Activated CD8-positive, alpha-beta T cell treated with anti-CD3 and anti-CD28 coated beads for 36 hours (primary cell): ENCODE measurements at regions of chr1 and their contacts with region 1.

Region 1: DNA sequence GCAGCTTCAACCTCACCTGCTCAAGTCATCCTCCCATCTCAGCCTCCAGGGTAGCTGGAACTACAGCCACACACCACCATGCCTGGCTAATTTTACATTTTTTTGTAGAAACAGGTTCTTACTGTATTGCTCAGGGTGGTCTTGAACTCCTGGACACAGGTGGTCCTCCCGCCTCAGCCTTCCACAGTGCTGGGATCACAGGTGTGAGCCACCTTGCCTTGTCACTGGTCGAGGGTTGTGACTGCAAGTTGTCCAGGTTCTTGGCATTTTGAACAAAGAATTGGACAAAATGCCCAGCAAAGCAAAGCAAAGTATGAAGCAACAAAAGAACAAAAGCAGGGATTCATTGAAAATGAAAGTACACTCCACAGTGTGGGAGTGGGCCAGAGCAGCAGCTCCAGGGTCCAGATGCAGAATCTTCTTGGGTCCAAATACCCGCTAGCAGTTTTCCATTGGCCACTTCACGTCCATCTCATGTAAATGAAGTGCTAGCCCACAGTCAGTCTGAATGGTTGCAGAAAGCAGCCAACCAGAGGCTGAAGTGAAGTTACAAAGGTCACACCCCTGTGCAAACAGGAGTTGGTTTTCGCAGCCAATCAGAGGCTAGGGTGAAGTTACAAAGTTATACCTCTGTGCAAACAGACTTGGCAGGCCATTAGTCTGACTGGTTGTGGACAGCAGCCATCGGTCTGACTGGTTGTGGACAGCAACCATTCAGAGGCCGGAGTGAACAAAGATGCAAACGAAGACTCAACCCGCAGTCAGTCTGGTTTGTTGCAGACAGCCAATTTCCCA is 109.5 kb upstream of the KIF26B start:
- DNase-seq: no peak
- ATAC-seq: no peak
- H3K4me3 Mint-ChIP-seq: no peak overlapping the region
- H3K27ac Mint-ChIP-seq: no peak overlapping the region
- H3K4me1 Mint-ChIP-seq: no peaks in the 10 kb centered on the region
- H3K27me3 Mint-ChIP-seq: no peaks in the 10 kb centered on the region
- CTCF ChIP-seq: no peak

Region 2: DNA sequence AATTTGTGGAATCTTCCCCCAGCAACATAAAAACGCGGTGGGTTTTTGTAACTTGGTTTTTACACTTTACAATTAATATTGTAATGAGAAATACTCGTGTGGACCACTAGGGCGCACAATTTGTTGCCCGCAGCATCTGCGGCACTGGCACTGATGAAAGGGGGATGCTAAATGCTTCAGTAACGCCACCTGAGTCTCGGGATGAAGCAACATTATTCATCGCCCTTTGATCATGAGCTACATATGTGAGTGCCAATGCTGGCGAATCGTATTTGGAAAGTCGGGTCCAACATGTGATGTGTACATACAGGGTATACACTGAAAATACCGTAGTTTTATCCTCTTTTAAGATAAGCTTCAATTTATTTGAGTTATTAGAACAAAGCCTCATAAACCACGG is 244.0 kb before region 1 on chr1:
- CTCF ChIA-PET with region 1: interaction called, 78 read pairs
- POLR2A ChIA-PET with region 1: interaction called, 4 read pairs
- intact Hi-C with region 1: loop called (anchors 2 kb)
- DNase-seq: peak; percentile 75
- ATAC-seq: peak; percentile 95
- H3K4me3 Mint-ChIP-seq: no peak overlapping the region
- H3K27ac Mint-ChIP-seq: no peak overlapping the region
- H3K4me1 Mint-ChIP-seq: peaks cover 4% of the 10 kb centered on the region
- H3K27me3 Mint-ChIP-seq: no peaks in the 10 kb centered on the region
- CTCF ChIP-seq: peak; percentile 78

Region 3: GRCh38 chr1:244849189-244849866 is 196.0 kb before region 1 on chr1:
- CTCF ChIA-PET with region 1: interaction called, 12 read pairs
- POLR2A ChIA-PET with region 1: interaction called, 4 read pairs
- intact Hi-C with region 1: no loop called
- DNase-seq: no peak
- ATAC-seq: no peak
- H3K4me3 Mint-ChIP-seq: no peak overlapping the region
- H3K27ac Mint-ChIP-seq: peak overlapping the region; percentile 46
- H3K4me1 Mint-ChIP-seq: peaks cover 75% of the 10 kb centered on the region
- H3K27me3 Mint-ChIP-seq: no peaks in the 10 kb centered on the region
- CTCF ChIP-seq: no peak

Region 4: GRCh38 chr1:244970661-244971551 is 74.4 kb before region 1 on chr1:
- CTCF ChIA-PET with region 1: interaction called, 32 read pairs
- POLR2A ChIA-PET with region 1: interaction called, 3 read pairs
- intact Hi-C with region 1: no loop called
- DNase-seq: peak; percentile 94
- ATAC-seq: peak; percentile 87
- H3K4me3 Mint-ChIP-seq: peak overlapping the region; percentile 88
- H3K27ac Mint-ChIP-seq: peak overlapping the region; percentile 97
- H3K4me1 Mint-ChIP-seq: peaks cover 11% of the 10 kb centered on the region
- H3K27me3 Mint-ChIP-seq: no peaks in the 10 kb centered on the region
- CTCF ChIP-seq: peak; percentile 55

Region 5: GRCh38 chr1:245031041-245031440 is 14.2 kb before region 1 on chr1:
- CTCF ChIA-PET with region 1: interaction called, 21 read pairs
- POLR2A ChIA-PET with region 1: no interaction called
- intact Hi-C with region 1: no loop called
- DNase-seq: no peak
- ATAC-seq: no peak
- H3K4me3 Mint-ChIP-seq: no peak overlapping the region
- H3K27ac Mint-ChIP-seq: no peak overlapping the region
- H3K4me1 Mint-ChIP-seq: peaks cover 3% of the 10 kb centered on the region
- H3K27me3 Mint-ChIP-seq: no peaks in the 10 kb centered on the region
- CTCF ChIP-seq: no peak